ENCODE measurements at regions of chr18 and their contacts with region 1.

Region 1: GRCh38 chr18:3454365-3455089 is 4.6 kb downstream of the TGIF1 start:
- DNase-seq: peak; percentile 95
- H3K4me3 ChIP-seq: peak overlapping the region; percentile 43 to 92 (median 90)
- H3K27ac ChIP-seq: peak overlapping the region; percentile 98
- H3K4me1 ChIP-seq: peaks cover 54% of the 10 kb centered on the region
- H3K27me3 ChIP-seq: no peaks in the 10 kb centered on the region
- CTCF ChIP-seq: peak; percentile 51 to 60
- POLR2A ChIP-seq: no peak

Region 2: DNA sequence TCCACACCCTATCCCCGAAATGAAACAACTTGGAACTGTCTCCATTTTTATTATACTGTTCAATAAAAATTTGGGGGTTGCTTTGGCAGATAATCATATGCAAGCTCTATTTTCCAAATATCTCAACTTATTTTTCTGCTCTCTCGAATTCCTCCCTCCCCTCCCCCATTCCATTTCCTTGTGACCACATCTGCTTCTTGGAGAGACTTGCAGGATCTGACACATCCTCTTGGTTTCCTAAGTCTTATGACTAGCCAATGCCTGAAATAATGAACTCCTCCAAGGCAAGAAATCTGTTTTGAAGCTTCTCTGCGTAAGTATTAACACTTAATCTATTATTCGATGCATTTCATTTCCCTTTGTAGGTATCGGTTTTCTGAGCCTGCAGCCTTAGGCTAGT is 11.5 kb after region 1 on chr18:
- CTCF ChIA-PET with region 1: interaction called, 56 read pairs
- POLR2A ChIA-PET with region 1: interaction called, 14 read pairs
- dilution Hi-C with region 1: no loop called
- intact Hi-C with region 1: loop called (anchors 1 kb)
- DNase-seq: peak; percentile 92
- H3K4me3 ChIP-seq: peak overlapping the region in 1 of 3 experiments; percentile 47
- H3K27ac ChIP-seq: peak overlapping the region; percentile 92
- H3K4me1 ChIP-seq: peaks cover 36% of the 10 kb centered on the region
- H3K27me3 ChIP-seq: no peaks in the 10 kb centered on the region
- CTCF ChIP-seq: no peak
- POLR2A ChIP-seq: no peak

Region 3: DNA sequence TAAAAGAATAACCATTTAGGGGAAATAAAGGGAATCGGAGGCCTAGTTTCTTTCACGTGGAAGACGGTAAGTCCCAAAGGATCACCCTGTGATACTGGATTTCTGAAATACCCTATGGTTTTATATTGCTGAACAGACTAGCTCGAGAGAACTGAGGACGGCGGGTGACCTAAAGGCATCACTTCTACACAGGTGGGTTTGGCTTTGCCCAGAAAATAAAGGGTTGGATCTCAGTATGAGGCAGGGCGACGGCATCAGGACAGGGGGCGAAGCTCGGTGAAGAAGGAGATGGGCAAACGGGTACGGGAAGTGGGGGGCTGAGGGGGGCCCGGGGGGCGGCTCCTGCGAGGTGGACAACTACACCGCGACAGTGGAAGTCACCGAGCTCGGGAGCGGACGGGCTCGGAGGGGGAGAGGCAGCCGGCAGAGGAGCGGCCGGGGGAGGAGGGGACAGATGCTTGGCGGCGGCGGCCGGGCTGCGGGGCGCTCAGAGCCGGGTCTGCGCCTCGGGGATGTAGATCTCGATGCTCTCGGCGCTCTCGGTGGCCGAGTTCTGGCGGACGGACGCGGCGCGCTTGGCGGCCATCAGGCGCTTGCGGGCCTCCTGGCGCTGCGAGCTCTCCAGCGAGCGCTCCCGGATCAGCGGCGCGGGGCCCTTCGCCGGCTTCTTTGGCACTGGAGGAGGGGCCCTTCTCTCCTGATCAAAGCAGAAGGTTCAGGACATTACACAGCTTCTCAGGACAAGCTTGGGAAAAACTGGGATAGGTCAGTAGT is 44.4 kb after region 1 on chr18:
- CTCF ChIA-PET with region 1: interaction called, 3 read pairs
- POLR2A ChIA-PET with region 1: no interaction called
- dilution Hi-C with region 1: no loop called
- intact Hi-C with region 1: loop called (anchors 2 kb)
- DNase-seq: peak; percentile 43
- H3K4me3 ChIP-seq: peak overlapping the region in 2 of 3 experiments; percentile 45 to 49
- H3K27ac ChIP-seq: no peak overlapping the region
- H3K4me1 ChIP-seq: peaks cover 14% of the 10 kb centered on the region
- H3K27me3 ChIP-seq: peaks cover 0 to 2% of the 10 kb centered on the region in 2 experiments
- CTCF ChIP-seq: no peak
- POLR2A ChIP-seq: no peak

Region 4: GRCh38 chr18:3585656-3586509 is 131.4 kb after region 1 on chr18:
- CTCF ChIA-PET with region 1: interaction called, 61 read pairs
- POLR2A ChIA-PET with region 1: no interaction called
- dilution Hi-C with region 1: no loop called
- intact Hi-C with region 1: loop called (anchors 1 kb)
- DNase-seq: peak; percentile 81
- H3K4me3 ChIP-seq: no peak overlapping the region
- H3K27ac ChIP-seq: no peak overlapping the region
- H3K4me1 ChIP-seq: peaks cover 2% of the 10 kb centered on the region
- H3K27me3 ChIP-seq: no peaks in the 10 kb centered on the region
- CTCF ChIP-seq: peak; percentile 75 to 78
- POLR2A ChIP-seq: no peak

Region 5: DNA sequence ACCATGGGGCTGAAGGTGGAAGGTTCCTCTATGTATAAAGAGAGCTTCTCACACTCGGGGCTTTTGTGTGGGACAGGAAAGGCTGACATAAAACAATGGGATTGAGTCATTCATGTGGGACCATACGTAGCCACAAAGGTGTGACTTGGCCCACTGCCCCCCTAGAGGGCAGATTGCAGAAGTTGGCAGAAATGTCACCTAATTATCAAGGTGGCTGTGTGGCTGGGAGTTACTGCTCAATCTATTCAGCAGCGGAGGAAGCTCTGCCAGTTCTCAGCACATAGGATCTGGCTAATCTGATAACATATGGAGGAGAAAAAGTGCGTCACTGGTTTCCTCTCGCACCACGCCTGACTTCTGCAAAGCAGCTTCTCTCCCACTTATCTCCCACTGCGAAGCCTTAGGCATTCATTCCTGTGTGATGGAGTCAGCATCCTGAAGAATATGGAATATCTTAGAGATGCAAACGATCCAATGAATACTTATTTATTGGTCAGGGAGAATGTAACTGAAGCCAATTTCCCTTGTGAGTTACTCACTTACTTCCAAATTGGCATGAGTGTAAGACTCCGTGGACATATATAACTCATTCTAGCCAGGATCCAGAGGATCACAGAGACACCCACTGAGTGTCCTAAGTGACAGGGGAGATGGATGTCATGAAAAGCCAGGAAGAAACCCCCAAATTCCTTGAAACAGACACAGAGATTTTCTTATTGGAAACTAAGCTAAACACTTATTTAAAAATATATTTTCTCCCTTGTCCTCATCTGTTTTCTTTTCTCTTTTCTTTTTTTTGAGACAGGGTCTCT is 340.2 kb after region 1 on chr18:
- CTCF ChIA-PET with region 1: no interaction called
- POLR2A ChIA-PET with region 1: no interaction called
- dilution Hi-C with region 1: no loop called
- intact Hi-C with region 1: loop called (anchors 2 kb)
- DNase-seq: peak; percentile 97
- H3K4me3 ChIP-seq: no peak overlapping the region
- H3K27ac ChIP-seq: peak overlapping the region; percentile 95
- H3K4me1 ChIP-seq: peaks cover 34% of the 10 kb centered on the region
- H3K27me3 ChIP-seq: no peaks in the 10 kb centered on the region
- CTCF ChIP-seq: peak in 1 of 2 donors; percentile 6
- POLR2A ChIP-seq: no peak